ENCODE measurements at regions of chr16 and their contacts with region 1.

Region 1: DNA sequence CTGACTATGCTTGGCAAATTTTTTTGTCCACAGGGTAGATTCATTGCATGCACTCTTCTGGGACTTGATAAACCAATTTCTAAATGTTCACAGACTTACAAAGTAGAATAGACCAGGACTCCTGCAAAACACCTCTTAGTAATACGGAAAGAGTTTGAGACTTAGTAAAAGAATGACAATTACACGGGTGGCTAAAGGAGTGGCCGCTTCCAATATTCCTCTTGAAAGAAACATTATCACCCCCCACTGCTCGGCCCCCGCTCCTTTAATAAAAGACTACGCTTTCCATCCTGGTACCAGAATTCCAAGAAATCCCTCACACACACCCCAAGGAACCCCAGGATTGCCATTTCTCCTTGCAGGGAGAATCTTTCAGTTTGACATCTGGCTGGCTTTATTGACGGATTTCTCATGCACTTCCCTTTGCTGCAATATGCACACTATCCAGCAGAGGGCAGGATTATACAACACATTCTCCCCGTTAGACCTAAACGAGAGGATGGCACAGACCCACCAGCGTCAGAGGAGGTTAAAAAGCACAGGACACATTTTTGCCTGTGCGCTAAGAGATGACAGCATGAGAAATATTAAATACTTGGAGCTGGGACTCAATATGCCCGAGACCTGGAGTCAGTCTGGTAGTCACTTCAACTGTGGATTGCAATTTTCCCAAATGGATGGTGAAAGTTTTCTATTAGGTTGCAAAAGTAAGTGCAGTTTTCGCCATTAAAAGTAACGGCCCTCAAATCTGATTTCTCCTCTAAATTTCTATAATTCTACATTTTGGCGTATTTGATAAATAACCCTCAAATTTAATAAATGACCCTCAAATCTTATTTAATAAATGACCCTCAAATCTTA is 46.6 kb upstream of the NUDT7 start:
- DNase-seq: peak; percentile 57
- H3K4me3 ChIP-seq: no peak overlapping the region; the same call in 1 of the 2 replicates
- H3K27ac ChIP-seq: no peak overlapping the region
- H3K27me3 ChIP-seq: peaks cover 2% of the 10 kb centered on the region
- CTCF ChIP-seq: peak; percentile 93

Region 2: DNA sequence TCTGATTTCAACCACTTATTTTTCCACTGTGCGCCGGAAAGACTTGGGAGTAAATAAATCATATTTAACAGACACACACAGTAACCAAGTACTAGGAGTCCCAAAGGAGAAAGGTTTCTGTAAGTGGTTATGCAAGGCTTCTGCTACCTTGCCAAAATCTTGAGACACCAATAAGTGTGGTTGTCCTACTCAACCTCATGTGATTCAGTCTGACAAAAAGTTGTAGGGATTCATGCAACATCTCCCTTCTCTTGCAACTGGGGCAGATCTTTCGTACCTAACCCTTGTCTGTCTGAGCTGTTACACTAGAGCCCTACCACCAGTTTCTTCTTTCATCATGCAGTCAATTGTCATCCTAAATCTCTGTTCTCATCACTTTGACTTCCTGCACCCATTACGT is 23.3 kb before region 1 on chr16:
- CTCF ChIA-PET with region 1: no interaction called
- POLR2A ChIA-PET with region 1: no interaction called
- DNase-seq: no peak
- H3K4me3 ChIP-seq: no peak overlapping the region
- H3K27ac ChIP-seq: no peak overlapping the region
- H3K27me3 ChIP-seq: no peaks in the 10 kb centered on the region
- CTCF ChIP-seq: no peak

Region 3: GRCh38 chr16:77963185-77964044 is 287.7 kb after region 1 on chr16:
- CTCF ChIA-PET with region 1: interaction called, 135 read pairs
- POLR2A ChIA-PET with region 1: interaction called, 3 read pairs
- DNase-seq: no peak
- H3K4me3 ChIP-seq: no peak overlapping the region
- H3K27ac ChIP-seq: no peak overlapping the region
- H3K27me3 ChIP-seq: no peaks in the 10 kb centered on the region
- CTCF ChIP-seq: no peak

Region 4: DNA sequence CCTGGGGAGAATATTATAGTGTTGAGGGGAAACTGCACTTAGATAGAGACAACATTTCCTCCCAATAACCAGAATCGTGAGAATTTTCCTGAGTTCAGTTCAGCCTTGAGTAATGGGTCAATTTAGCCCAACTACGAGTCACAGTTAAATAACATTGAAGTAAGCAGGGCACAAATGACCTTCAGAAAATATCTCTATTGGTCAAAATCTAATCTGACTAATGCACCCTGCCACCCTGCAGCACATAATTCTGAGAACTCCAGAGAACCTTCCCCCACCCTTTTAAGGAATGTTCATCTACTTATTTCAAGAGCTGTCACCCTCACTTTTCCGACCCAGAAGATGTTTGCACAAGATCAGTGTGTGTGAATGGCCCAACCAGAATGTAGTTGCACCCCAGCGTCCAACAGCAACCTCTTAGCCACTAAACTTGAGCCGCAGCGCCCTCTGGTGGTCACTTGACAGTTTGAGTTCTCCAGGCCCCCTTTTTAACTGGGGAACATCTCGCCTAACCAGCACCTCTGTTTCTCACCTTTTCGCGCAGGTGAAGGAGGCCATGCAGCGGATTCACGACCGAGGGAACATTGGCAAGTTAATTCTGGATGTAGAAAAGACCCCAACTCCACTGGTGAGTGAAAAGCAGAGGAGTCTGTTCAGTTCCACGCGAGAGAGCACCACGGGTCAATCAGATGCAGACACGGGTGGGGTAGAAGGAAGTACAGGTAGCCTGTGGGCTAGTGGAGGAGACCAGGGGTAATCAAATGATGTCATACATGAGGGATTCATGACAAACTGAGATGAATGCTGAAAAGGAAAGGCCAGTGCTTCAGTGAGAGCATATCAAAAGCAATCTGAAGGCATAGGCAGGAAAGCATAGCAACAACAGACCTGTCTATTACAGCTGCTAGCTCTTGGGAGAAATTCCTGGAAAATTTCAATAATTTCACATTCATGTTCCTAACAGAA is 295.9 kb after region 1 on chr16:
- CTCF ChIA-PET with region 1: interaction called, 135 read pairs
- POLR2A ChIA-PET with region 1: interaction called, 6 read pairs
- DNase-seq: peak; percentile 59
- H3K4me3 ChIP-seq: no peak overlapping the region
- H3K27ac ChIP-seq: peak overlapping the region; percentile 21
- H3K27me3 ChIP-seq: no peaks in the 10 kb centered on the region
- CTCF ChIP-seq: peak; percentile 86

Region 5: GRCh38 chr16:77993111-77993985 is 317.7 kb after region 1 on chr16:
- CTCF ChIA-PET with region 1: interaction called, 19 read pairs
- POLR2A ChIA-PET with region 1: no interaction called
- DNase-seq: peak; percentile 18
- H3K4me3 ChIP-seq: peak overlapping the region; percentile 11; the same call in 1 of the 2 replicates
- H3K27ac ChIP-seq: peak overlapping the region; percentile 89
- H3K27me3 ChIP-seq: no peaks in the 10 kb centered on the region
- CTCF ChIP-seq: no peak

Region 6: DNA sequence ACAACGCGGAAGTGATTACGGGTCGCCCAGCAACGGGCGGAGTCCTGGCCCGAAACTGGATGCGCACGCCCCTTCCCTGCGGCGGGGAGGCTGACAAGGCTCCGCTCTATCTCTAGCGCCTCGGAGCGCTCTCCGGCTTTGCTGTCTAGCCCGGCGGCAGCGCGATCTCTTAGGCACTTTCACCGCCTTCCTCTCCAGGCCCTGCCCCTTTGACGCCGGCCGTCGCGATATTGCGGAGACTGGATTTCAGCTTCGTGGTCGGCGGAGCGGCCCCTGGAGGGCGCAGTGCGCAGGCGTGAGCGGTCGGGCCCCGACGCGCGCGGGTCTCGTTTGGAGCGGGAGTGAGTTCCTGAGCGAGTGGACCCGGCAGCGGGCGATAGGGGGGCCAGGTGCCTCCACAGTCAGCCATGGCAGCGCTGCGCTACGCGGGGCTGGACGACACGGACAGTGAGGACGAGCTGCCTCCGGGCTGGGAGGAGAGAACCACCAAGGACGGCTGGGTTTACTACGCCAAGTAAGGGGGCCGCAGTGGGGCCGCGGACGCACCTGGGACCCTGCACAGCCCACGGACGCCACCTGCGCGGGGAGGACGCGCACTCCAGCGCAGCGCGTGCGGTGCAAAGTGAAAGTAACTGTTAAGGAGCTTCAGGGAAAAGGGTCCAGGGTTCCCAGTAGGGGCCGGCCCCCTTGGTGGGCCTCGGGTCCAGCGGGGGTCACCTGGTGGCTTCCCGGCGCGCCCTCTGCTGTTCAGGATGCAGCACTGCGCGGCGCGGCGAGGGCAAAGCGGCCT is 423.9 kb after region 1 on chr16 and contains the start of gene WWOX:
- CTCF ChIA-PET with region 1: interaction called, 12 read pairs
- POLR2A ChIA-PET with region 1: no interaction called
- DNase-seq: peak; percentile 96
- H3K4me3 ChIP-seq: peak within 1 kb of the TSS; percentile 98
- H3K27ac ChIP-seq: peak within 1 kb of the TSS; percentile 70
- H3K27me3 ChIP-seq: no peaks in the 10 kb centered on the region
- CTCF ChIP-seq: peak; percentile 82
- polyA plus RNA-seq, gene WWOX: 2.1 TPM in 2 replicates